Testis (tissue), 5 donors: ENCODE measurements at regions of chr3 and their contacts with region 1.

Region 1: GRCh38 chr3:24237971-24238767 is 256.5 kb downstream of the THRB start:
- DNase-seq: peak; percentile 72
- H3K4me3 ChIP-seq: no peak overlapping the region
- H3K27ac ChIP-seq: no peak overlapping the region
- H3K4me1 ChIP-seq: no peaks in the 10 kb centered on the region
- H3K27me3 ChIP-seq: no peaks in the 10 kb centered on the region
- CTCF ChIP-seq: peak; percentile 51 to 81 (median 70)
- POLR2A ChIP-seq: no peak

Region 2: DNA sequence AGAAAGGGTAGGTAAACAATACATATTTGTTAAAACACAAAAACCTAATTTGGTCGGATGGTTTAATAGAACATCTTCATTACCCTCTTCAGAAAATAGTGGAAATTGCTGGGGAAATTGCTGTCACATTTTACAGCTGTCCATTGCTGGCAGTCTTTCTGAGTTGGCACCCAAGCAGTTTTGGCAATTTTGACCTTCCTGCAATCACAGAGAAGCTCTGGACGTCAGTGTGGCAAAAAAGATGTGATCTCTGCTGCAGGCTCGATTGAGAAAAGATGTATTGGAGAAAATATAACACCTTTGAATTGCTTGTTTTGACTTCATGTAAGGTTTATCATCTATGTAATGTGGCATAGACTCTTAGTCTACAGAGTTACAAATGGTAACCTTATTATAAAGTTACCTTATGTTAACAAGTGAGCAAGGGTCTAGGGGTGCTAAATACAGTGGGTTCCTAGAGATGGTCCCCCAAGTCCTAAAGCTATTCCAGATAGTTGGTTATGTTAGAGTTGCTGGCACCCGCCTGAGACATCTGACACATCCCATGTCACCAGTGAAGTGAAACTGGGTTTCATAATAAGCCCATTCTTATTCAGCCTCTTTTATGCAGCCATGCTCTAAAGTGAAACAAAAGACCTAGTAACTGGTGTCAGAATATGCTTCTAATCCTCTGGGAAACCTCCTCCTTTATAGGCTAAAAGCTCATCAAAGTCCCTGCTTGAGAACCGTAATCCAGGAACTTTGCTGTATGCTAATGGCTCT is 418.4 kb before region 1 on chr3:
- intact Hi-C with region 1: no loop called
- DNase-seq: no peak
- H3K4me3 ChIP-seq: no peak overlapping the region
- H3K27ac ChIP-seq: no peak overlapping the region
- H3K4me1 ChIP-seq: no peaks in the 10 kb centered on the region
- H3K27me3 ChIP-seq: no peaks in the 10 kb centered on the region
- CTCF ChIP-seq: no peak
- POLR2A ChIP-seq: no peak

Region 3: DNA sequence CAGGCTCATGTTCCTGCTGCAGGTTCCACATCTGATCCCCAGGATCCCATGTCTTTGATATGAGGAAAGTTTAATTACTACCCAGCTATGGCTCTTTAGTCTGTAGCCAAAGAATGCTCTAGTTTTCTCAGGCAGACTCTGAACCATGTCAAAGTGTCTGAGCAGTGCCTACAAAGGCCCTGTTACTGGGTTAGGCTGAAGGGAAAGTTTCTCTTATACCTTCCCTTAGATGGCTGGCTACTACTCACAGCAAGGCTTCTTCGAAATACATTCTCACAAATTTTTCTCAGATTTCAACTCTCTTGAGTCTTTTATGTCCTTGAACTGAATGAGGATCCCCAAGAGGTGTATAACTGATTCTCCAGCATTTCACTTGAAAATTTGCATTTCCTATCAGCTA is 190.7 kb before region 1 on chr3:
- intact Hi-C with region 1: no loop called
- DNase-seq: no peak
- H3K4me3 ChIP-seq: no peak overlapping the region
- H3K27ac ChIP-seq: peak overlapping the region in 1 of 2 donors; percentile 21
- H3K4me1 ChIP-seq: peaks cover 5% of the 10 kb centered on the region
- H3K27me3 ChIP-seq: no peaks in the 10 kb centered on the region
- CTCF ChIP-seq: no peak
- POLR2A ChIP-seq: no peak

Region 4: GRCh38 chr3:24185738-24186384 is 52.3 kb before region 1 on chr3:
- intact Hi-C with region 1: loop called (anchors 10 kb)
- DNase-seq: peak; percentile 56
- H3K4me3 ChIP-seq: no peak overlapping the region
- H3K27ac ChIP-seq: no peak overlapping the region
- H3K4me1 ChIP-seq: no peaks in the 10 kb centered on the region
- H3K27me3 ChIP-seq: no peaks in the 10 kb centered on the region
- CTCF ChIP-seq: peak; percentile 61 to 78 (median 63)
- POLR2A ChIP-seq: no peak

Region 5: DNA sequence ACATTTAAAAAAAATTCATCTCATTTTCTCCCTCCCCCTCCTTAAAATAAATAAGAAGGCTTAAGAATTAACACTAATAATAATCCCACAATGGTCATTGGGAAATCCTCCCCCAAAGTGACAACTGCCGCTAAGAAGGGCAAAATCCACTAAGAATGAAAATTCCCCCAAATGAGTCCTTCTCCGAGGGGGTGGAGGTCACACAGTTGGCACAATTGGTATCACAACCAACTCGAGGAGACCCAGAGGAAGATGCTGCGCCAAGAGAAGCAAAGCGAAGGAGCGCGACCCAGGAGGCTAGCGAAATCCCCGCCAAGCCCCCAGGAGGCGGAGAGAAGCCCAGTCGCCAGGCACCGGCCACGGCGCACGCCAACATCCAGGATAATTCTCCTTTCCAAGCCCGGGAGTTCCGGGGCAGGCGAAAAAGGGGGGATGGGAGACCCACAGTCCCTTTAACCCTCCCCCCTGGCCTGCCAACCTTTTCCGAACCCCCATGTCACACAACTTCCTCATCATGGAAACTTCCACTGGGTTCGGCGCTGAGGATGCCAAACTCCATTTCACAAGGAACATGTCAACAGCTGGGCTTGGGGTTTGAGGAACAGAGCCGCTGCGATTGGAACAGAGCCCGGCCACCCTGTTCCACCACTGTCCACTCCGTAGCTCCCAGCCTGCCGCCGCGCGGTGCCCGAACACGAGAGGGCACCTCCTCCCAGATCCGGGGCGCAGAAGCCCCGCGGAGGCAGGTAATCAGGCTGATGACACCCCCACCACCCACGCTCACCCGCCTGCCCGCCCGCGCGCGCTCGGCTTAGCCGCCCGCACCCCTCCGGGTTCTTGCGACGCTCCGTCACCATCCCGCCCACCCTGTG is 255.8 kb after region 1 on chr3:
- intact Hi-C with region 1: no loop called
- DNase-seq: peak; percentile 63
- H3K4me3 ChIP-seq: peak overlapping the region; percentile 63 to 75
- H3K27ac ChIP-seq: peak overlapping the region; percentile 76 to 85
- H3K4me1 ChIP-seq: no peaks in the 10 kb centered on the region
- H3K27me3 ChIP-seq: no peaks in the 10 kb centered on the region
- CTCF ChIP-seq: no peak
- POLR2A ChIP-seq: no peak

Region 6: DNA sequence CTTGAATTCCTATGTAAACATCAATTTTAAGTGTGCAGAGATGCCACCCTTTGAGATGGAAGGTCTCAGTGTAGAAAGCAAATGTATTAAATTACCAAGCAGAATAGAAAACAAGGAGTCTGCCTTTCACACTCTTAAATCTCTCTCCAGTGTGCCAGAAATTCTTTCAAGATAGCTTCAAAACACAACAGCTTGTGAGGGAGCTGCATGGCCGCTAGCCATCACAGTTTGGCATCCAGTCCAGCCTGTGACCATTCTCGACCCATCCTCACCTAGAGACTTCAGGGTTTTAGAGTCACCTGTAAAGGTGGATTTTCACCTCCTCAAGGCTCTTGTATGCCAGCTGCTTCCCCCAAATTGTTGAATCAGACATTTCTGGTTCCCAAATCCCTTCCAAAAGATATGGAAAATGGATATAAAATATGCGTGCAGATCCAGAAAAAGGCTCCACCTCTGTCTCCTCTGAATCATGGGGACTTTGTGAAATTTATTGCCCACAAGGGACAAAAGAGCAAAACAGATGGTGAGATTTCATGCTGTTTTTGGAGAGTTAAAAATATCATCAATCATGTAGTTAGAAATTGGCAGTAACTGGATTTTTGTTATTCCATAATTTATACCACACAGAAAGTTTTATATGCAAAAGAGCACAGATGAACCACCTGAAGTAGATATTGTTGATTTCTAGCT is 370.7 kb after region 1 on chr3:
- intact Hi-C with region 1: no loop called
- DNase-seq: no peak
- H3K4me3 ChIP-seq: no peak overlapping the region
- H3K27ac ChIP-seq: no peak overlapping the region
- H3K4me1 ChIP-seq: no peaks in the 10 kb centered on the region
- H3K27me3 ChIP-seq: no peaks in the 10 kb centered on the region
- CTCF ChIP-seq: no peak
- POLR2A ChIP-seq: no peak